ENCODE measurements at regions of chr14 and their contacts with region 1.

Region 1: GRCh38 chr14:45426670-45427282 is 173.8 kb upstream of the MIS18BP1 start:
- DNase-seq: peak in 1 of 9 donors; percentile 4
- ATAC-seq: no peak
- H3K4me3 ChIP-seq: no peak overlapping the region
- H3K4me3 Mint-ChIP-seq: no peak overlapping the region
- H3K27ac ChIP-seq: no peak overlapping the region
- H3K27ac Mint-ChIP-seq: no peak overlapping the region
- H3K4me1 ChIP-seq: no peaks in the 10 kb centered on the region
- H3K4me1 Mint-ChIP-seq: no peaks in the 10 kb centered on the region
- H3K27me3 ChIP-seq: no peaks in the 10 kb centered on the region
- H3K27me3 Mint-ChIP-seq: no peaks in the 10 kb centered on the region

Region 2: DNA sequence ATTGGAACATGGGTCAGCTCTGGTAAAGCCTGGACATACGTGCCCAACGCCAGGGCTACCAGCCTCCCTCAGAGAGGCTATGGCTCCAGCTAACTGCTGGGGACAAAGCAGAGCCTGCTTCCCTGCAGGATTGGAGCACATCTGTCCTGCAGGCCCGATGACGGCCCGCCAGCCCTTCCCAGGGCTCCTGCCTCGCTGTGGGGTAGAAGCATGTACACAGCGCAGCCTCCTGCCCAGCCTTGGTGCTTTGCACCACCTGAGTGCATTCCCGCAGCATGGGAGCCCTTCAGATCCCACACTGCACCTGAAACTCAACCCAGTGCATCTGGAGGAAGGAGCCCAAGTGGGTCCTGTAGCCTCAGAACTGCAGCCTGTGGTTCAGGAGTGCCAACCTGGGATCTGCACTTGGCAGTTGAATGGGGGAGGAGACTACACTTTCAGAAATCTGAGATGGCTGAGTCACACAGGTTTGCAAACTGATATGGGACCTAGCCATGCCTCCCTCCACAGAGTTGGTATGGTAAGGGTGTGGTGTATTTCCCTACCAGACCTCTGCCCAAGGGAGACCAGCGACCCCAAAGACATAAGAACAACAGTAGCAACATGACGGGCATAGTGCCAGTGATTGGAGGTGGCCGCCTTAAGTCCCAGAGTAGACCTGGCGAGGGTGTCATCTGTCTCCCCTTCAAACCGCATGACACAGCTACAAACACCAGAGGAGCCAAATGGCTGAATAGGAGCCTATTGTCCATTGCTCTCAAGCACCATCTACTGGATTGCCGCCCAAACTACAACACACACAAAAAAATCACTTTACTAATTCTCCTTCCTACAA is 100.2 kb after region 1 on chr14:
- CTCF ChIA-PET with region 1: no interaction called
- POLR2A ChIA-PET with region 1: no interaction called
- intact Hi-C with region 1: loop called in 1 of 2 experiments (anchors 1 kb)
- DNase-seq: no peak
- ATAC-seq: no peak
- H3K4me3 ChIP-seq: no peak overlapping the region
- H3K4me3 Mint-ChIP-seq: no peak overlapping the region
- H3K27ac ChIP-seq: no peak overlapping the region
- H3K27ac Mint-ChIP-seq: peak overlapping the region in 1 of 9 donors; percentile 28
- H3K4me1 ChIP-seq: no peaks in the 10 kb centered on the region
- H3K4me1 Mint-ChIP-seq: no peaks in the 10 kb centered on the region
- H3K27me3 ChIP-seq: no peaks in the 10 kb centered on the region
- H3K27me3 Mint-ChIP-seq: no peaks in the 10 kb centered on the region

Region 3: GRCh38 chr14:46344327-46344937 is 917.7 kb after region 1 on chr14:
- CTCF ChIA-PET with region 1: no interaction called
- POLR2A ChIA-PET with region 1: no interaction called
- intact Hi-C with region 1: loop called in 1 of 2 experiments (anchors 2 kb)
- DNase-seq: no peak
- ATAC-seq: no peak
- H3K4me3 ChIP-seq: no peak overlapping the region
- H3K4me3 Mint-ChIP-seq: no peak overlapping the region
- H3K27ac ChIP-seq: no peak overlapping the region
- H3K27ac Mint-ChIP-seq: no peak overlapping the region
- H3K4me1 ChIP-seq: no peaks in the 10 kb centered on the region
- H3K4me1 Mint-ChIP-seq: no peaks in the 10 kb centered on the region
- H3K27me3 ChIP-seq: no peaks in the 10 kb centered on the region
- H3K27me3 Mint-ChIP-seq: no peaks in the 10 kb centered on the region

Region 4: DNA sequence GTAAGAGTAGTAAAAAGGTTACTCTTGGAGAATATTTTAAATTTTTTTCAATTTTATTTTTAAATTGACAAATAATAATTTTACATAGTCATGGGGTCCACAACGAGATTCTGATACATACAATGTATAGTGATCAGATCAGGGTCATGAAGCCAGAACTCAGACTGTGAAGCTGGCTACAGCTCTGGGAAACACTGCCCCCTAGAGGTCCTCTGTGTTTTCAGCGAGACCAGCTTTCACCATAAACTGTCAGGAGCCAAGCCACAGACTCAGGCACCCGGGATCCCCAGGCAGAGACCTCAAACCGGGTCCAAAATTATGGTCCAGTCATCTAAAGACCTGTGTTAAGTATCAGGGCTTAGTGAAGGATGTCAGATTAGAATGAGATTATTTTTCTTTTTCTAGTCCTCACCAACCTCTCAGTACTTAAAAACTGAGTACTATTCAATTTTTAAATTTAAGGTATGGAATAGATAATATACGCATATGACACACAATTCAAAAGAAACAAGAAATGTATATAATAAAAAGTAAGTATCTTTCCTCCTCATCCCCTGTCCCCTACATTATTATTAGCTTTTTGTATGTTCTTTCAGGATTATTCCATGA is 1851.6 kb after region 1 on chr14:
- CTCF ChIA-PET with region 1: no interaction called
- POLR2A ChIA-PET with region 1: no interaction called
- intact Hi-C with region 1: loop called in 1 of 2 experiments (anchors 10 kb)
- DNase-seq: peak in 4 of 9 donors; percentile 0 to 26 (median 3)
- ATAC-seq: no peak
- H3K4me3 ChIP-seq: no peak overlapping the region
- H3K4me3 Mint-ChIP-seq: no peak overlapping the region
- H3K27ac ChIP-seq: no peak overlapping the region
- H3K27ac Mint-ChIP-seq: no peak overlapping the region
- H3K4me1 ChIP-seq: no peaks in the 10 kb centered on the region
- H3K4me1 Mint-ChIP-seq: no peaks in the 10 kb centered on the region
- H3K27me3 ChIP-seq: no peaks in the 10 kb centered on the region
- H3K27me3 Mint-ChIP-seq: no peaks in the 10 kb centered on the region

Measured in naive thymus-derived CD4-positive, alpha-beta T cell (primary cell).